CD4-positive, alpha-beta memory T cell (primary cell): ENCODE measurements at regions of chr19 and their contacts with region 1.

Region 1: GRCh38 chr19:4108767-4109625 is 14.9 kb downstream of the MAP2K2 start:
- DNase-seq: peak; percentile 73 to 87 (median 77)
- H3K4me3 ChIP-seq: no peak overlapping the region
- H3K4me3 Mint-ChIP-seq: peak overlapping the region; percentile 45 to 81 (median 68)
- H3K27ac ChIP-seq: peak overlapping the region; percentile 60
- H3K27ac Mint-ChIP-seq: peak overlapping the region; percentile 87 to 97 (median 95)
- H3K4me1 ChIP-seq: peaks cover 56% of the 10 kb centered on the region
- H3K4me1 Mint-ChIP-seq: peaks cover 19 to 72% (median 40%) of the 10 kb centered on the region in 4 donors
- H3K27me3 ChIP-seq: no peaks in the 10 kb centered on the region
- H3K27me3 Mint-ChIP-seq: no peaks in the 10 kb centered on the region

Region 2: GRCh38 chr19:4083677-4084546 is 25.1 kb before region 1 on chr19:
- CTCF ChIA-PET with region 1: interaction called, 6 read pairs
- POLR2A ChIA-PET with region 1: interaction called, 57 read pairs
- intact Hi-C with region 1: loop called (anchors 1 kb)
- DNase-seq: peak in 4 of 5 donors; percentile 35 to 49 (median 42)
- H3K4me3 ChIP-seq: no peak overlapping the region
- H3K4me3 Mint-ChIP-seq: peak overlapping the region; percentile 38 to 83 (median 66)
- H3K27ac ChIP-seq: peak overlapping the region; percentile 53
- H3K27ac Mint-ChIP-seq: peak overlapping the region; percentile 80 to 95 (median 89)
- H3K4me1 ChIP-seq: peaks cover 68% of the 10 kb centered on the region
- H3K4me1 Mint-ChIP-seq: peaks cover 11 to 56% (median 39%) of the 10 kb centered on the region in 4 donors
- H3K27me3 ChIP-seq: no peaks in the 10 kb centered on the region
- H3K27me3 Mint-ChIP-seq: no peaks in the 10 kb centered on the region

Region 3: GRCh38 chr19:4089400-4089908 is 19.5 kb before region 1 on chr19:
- CTCF ChIA-PET with region 1: interaction called, 6 read pairs
- POLR2A ChIA-PET with region 1: interaction called, 57 read pairs
- intact Hi-C with region 1: loop called (anchors 1 kb)
- DNase-seq: peak; percentile 42 to 71 (median 53)
- H3K4me3 ChIP-seq: no peak overlapping the region
- H3K4me3 Mint-ChIP-seq: peak overlapping the region; percentile 67 to 84 (median 72)
- H3K27ac ChIP-seq: peak overlapping the region; percentile 46
- H3K27ac Mint-ChIP-seq: peak overlapping the region; percentile 90 to 94 (median 92)
- H3K4me1 ChIP-seq: peaks cover 53% of the 10 kb centered on the region
- H3K4me1 Mint-ChIP-seq: peaks cover 16 to 53% (median 38%) of the 10 kb centered on the region in 4 donors
- H3K27me3 ChIP-seq: no peaks in the 10 kb centered on the region
- H3K27me3 Mint-ChIP-seq: no peaks in the 10 kb centered on the region

Region 4: GRCh38 chr19:4094761-4095487 is 14.1 kb before region 1 on chr19:
- CTCF ChIA-PET with region 1: interaction called, 6 read pairs
- POLR2A ChIA-PET with region 1: interaction called, 57 read pairs
- intact Hi-C with region 1: no loop called
- DNase-seq: peak in 1 of 5 donors; percentile 28
- H3K4me3 ChIP-seq: no peak overlapping the region
- H3K4me3 Mint-ChIP-seq: no peak overlapping the region
- H3K27ac ChIP-seq: no peak overlapping the region
- H3K27ac Mint-ChIP-seq: no peak overlapping the region
- H3K4me1 ChIP-seq: peaks cover under 1% of the 10 kb centered on the region
- H3K4me1 Mint-ChIP-seq: peaks cover 0 to 2% (median under 1%) of the 10 kb centered on the region in 4 donors
- H3K27me3 ChIP-seq: no peaks in the 10 kb centered on the region
- H3K27me3 Mint-ChIP-seq: no peaks in the 10 kb centered on the region

Region 5: DNA sequence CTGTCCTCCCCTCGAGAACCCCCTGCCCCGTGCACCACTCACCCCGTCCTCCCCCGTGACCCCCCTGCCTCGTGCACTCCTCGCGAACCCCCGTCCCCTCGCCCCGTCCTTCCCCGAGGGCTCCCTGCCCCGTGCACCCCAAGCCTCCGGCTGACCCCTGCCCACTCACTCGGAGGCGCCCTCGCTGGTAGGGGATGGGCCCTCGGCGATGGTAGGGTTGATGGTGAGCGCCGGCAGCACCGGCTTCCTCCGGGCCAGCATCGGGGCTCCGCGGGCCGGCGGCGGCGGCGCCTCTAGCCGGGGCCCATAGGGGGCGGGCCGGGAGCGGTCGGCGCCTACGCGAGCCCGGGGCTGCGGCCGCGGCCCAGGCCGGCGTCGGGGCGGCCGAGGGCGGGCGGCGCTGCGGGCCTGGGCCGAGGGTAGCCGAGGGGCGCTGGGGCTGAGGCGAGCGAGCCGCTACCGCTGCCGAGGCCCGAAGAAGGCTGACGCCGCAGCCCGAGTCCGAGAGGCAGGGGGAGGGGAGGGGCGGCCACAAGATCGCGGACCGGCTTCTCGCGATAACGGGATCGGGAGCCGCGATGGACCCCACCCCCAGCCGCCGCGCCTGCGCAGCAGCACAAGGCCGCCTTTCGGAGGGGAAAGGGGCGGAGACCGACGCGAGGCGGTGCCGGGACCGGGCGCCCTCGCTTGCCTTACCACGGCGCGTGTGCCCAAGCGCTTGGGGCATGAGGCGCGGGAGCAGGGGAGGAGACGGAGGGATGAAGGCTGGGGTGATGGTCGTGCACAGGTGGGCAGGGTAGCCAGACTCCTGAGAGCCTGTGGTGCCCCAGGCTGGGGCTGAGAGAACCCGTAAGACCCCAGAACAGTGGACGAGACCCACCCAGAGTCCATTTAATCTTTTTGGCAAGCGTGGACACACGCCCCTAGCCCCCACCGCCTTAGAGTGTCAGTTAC is 14.9 kb after region 1 on chr19 and contains the start of gene MAP2K2:
- CTCF ChIA-PET with region 1: interaction called, 5 read pairs
- POLR2A ChIA-PET with region 1: interaction called, 4 read pairs
- intact Hi-C with region 1: loop called (anchors 1 kb)
- DNase-seq: peak; percentile 94 to 96 (median 95)
- H3K4me3 ChIP-seq: peak within 1 kb of the TSS; percentile 48 to 63
- H3K4me3 Mint-ChIP-seq: peak within 1 kb of the TSS; percentile 89 to 98 (median 92)
- H3K27ac ChIP-seq: peak within 1 kb of the TSS; percentile 74
- H3K27ac Mint-ChIP-seq: peak within 1 kb of the TSS; percentile 84 to 97 (median 96)
- H3K4me1 ChIP-seq: peaks cover 21% of the 10 kb centered on the region
- H3K4me1 Mint-ChIP-seq: peaks cover 15 to 30% (median 21%) of the 10 kb centered on the region in 4 donors
- H3K27me3 ChIP-seq: no peaks in the 10 kb centered on the region
- H3K27me3 Mint-ChIP-seq: no peaks in the 10 kb centered on the region
- total RNA-seq, gene MAP2K2: 125 to 126 TPM

Region 6: DNA sequence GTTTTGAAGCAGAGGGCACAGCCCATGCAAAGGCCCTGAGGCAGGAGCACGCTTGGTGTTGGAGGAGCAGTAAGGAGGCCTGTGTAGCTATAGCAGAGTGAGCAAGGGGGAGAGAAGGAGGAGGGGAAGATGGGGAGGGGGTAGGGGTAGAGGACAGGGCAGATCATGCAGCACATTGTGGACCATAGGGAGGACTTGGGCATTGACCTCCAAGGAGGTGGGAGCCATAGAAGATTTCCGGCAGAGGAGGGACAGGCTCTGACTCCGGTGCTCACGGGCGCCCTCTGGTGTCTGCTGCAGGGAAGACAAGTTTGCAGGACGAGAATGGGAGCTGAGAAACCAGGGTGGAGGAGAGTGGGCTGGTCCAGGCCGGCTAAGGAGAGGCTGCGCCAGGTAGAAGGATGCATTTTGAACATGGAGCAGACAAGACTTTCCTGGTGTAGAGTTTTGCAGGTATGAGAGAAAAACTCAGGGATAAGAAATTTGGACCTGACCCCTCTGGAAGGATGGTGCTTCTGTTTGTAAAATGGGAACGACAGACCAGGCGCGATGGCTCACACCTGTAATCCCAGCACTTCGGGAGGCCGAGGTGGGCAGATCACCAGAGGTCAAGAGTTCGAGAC is 30.7 kb after region 1 on chr19:
- CTCF ChIA-PET with region 1: interaction called, 12 read pairs
- POLR2A ChIA-PET with region 1: interaction called, 8 read pairs
- intact Hi-C with region 1: loop called (anchors 1 kb)
- DNase-seq: peak; percentile 74 to 80 (median 78)
- H3K4me3 ChIP-seq: no peak overlapping the region
- H3K4me3 Mint-ChIP-seq: peak overlapping the region; percentile 7 to 81 (median 60)
- H3K27ac ChIP-seq: no peak overlapping the region
- H3K27ac Mint-ChIP-seq: peak overlapping the region in 3 of 7 donors; percentile 16 to 59 (median 35)
- H3K4me1 ChIP-seq: peaks cover 9% of the 10 kb centered on the region
- H3K4me1 Mint-ChIP-seq: peaks cover 6 to 13% (median 10%) of the 10 kb centered on the region in 4 donors
- H3K27me3 ChIP-seq: no peaks in the 10 kb centered on the region
- H3K27me3 Mint-ChIP-seq: peaks cover 5 to 6% of the 10 kb centered on the region in 2 donors

Region 7: DNA sequence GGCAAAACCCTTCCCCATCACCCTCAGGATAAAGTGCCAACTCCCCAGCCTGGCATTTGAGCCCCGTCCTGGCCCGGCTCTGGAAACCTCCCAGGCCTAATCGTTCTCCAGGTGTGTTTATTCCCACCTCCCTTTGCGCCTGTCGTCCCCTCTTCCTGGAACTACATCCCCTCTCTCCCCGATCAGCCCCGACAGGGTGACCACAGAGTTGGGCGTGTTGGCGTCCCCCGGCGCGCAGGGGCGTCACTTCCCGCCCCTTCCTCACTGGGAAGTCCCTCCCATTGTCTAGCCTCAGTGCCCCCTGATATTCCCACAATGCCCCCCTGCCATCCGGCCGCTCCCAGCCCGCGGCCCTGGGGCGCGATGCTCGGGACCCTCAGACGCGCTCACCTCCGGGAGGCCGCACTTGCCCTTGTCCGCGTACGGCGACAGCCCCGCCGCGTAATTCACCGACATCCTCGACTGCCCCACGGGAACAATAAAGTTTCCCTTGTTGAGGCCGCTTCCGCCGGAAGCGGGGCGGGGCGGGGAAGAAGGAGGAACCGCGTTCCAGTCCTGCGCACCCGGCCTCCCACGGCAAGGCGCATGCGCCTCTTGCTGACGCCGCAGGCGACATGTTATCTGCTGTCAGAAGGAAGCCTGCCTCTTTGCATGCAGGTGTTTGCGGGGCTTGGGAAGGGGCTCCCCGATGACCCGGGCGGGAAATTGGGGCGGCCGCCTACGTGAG is 73.3 kb after region 1 on chr19 and contains the starts of genes ANKRD24 and SIRT6:
- CTCF ChIA-PET with region 1: no interaction called
- POLR2A ChIA-PET with region 1: no interaction called
- intact Hi-C with region 1: loop called (anchors 10 kb)
- DNase-seq: peak; percentile 95 to 96 (median 96)
- H3K4me3 ChIP-seq: peak within 1 kb of the TSS; percentile 91 to 97
- H3K4me3 Mint-ChIP-seq: peak within 1 kb of the TSS; percentile 94 to 99 (median 96)
- H3K27ac ChIP-seq: peak within 1 kb of the TSS; percentile 81
- H3K27ac Mint-ChIP-seq: peak within 1 kb of the TSS; percentile 92 to 100 (median 96)
- H3K4me1 ChIP-seq: peaks cover 27% of the 10 kb centered on the region
- H3K4me1 Mint-ChIP-seq: peaks cover 30 to 41% (median 33%) of the 10 kb centered on the region in 4 donors
- H3K27me3 ChIP-seq: no peaks in the 10 kb centered on the region
- H3K27me3 Mint-ChIP-seq: peaks cover 0 to 3% of the 10 kb centered on the region in 2 donors
- total RNA-seq, gene ANKRD24: 1.9 to 2.9 TPM
- total RNA-seq, gene SIRT6: 26.8 to 27.0 TPM